ENCODE measurements at regions of chr5 and their contacts with region 1.

Region 1: GRCh38 chr5:36606428-36607113 is at the start of gene SLC1A3:
- DNase-seq: no peak
- H3K4me3 ChIP-seq: peak within 1 kb of the TSS; percentile 56 to 74 (median 64)
- H3K27ac ChIP-seq: peak within 1 kb of the TSS; percentile 57 to 71 (median 62)
- H3K4me1 ChIP-seq: peaks cover 0 to 28% (median 20%) of the 10 kb centered on the region in 4 donors
- H3K27me3 ChIP-seq: no peaks in the 10 kb centered on the region
- CTCF ChIP-seq: no peak
- EP300 ChIP-seq: no peak
- POLR2A ChIP-seq: peak; percentile 52
- total RNA-seq, gene SLC1A3: 11.3 to 26.5 (median 21.2) TPM

Region 2: GRCh38 chr5:36422952-36423351 is 183.6 kb before region 1 on chr5:
- intact Hi-C with region 1: loop called (anchors 10 kb)
- DNase-seq: no peak
- H3K4me3 ChIP-seq: no peak overlapping the region
- H3K27ac ChIP-seq: no peak overlapping the region
- H3K4me1 ChIP-seq: peaks cover 0 to 22% (median 16%) of the 10 kb centered on the region in 4 donors
- H3K27me3 ChIP-seq: no peaks in the 10 kb centered on the region
- CTCF ChIP-seq: no peak
- EP300 ChIP-seq: no peak
- POLR2A ChIP-seq: no peak

Region 3: DNA sequence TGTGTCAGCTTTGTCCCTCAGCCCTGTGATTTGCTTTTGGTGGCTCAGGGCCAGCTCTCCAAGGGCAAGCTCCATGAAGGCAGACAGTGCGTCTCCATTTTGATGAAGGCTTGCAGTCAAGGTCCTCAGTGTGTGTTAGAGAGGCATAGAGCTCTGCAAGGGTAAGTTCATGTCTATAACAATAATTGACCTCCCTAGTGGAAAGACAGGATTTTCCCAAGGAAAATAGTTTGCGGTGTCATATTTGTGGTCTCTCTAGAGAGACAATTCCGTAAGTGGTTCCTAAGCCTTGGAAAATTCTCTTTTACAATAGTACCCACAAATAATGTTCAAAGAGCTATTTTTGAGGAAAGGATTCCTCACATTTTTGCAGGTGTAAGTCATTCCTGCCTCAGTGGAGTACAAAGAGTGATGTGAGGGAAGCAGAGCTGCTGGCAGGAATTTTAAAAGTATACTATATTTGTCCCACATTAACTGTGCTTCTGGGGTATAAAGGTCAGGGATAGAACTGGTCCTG is 40.0 kb after region 1 on chr5:
- intact Hi-C with region 1: no loop called
- DNase-seq: no peak
- H3K4me3 ChIP-seq: no peak overlapping the region
- H3K27ac ChIP-seq: no peak overlapping the region
- H3K4me1 ChIP-seq: peaks cover 0 to 7% (median 0%) of the 10 kb centered on the region in 4 donors
- H3K27me3 ChIP-seq: no peaks in the 10 kb centered on the region
- CTCF ChIP-seq: no peak
- EP300 ChIP-seq: no peak
- POLR2A ChIP-seq: no peak

Region 4: DNA sequence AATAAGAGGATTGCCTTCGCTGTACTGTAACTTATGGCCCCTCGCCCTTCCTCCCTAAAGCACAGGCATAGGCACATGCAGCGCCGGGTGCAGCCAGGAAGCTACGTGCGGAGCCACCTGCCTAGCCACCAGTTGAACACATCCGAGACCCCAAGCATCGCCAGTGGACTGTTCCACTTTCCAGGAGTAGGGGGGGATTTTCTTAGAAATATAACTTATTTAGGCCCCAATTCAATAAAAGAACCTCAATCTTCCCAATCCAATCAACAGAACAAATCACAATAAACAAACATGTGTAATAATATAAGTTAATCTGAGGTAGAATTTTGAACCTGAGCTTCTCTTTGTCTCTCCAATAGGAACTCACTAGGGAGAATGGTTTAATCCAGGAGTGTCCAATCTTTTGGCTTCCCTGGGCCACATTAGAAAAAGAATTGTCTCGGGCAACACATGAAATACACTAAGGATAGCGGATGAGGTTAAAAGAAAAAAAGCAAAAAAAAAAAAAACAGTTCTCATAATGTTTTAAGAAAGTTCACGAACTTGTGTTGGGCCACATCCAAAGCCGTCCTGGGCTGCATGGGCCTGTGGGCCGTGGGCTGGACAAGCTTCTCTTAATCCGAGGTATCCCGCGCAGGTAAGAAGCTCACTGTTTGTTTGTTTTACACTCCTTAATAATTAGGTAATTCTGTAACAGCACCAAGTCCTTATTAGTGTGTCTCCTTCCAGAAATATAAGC is 248.0 kb after region 1 on chr5:
- intact Hi-C with region 1: no loop called
- DNase-seq: no peak
- H3K4me3 ChIP-seq: no peak overlapping the region
- H3K27ac ChIP-seq: no peak overlapping the region
- H3K4me1 ChIP-seq: no peaks in the 10 kb centered on the region
- H3K27me3 ChIP-seq: peaks cover 0 to 4% (median 0%) of the 10 kb centered on the region in 4 donors
- CTCF ChIP-seq: no peak
- EP300 ChIP-seq: no peak
- POLR2A ChIP-seq: no peak

Measured in esophagus muscularis mucosa (tissue), 4 donors.